ENCODE measurements at regions of chr10 and their contacts with region 1.

Region 1: DNA sequence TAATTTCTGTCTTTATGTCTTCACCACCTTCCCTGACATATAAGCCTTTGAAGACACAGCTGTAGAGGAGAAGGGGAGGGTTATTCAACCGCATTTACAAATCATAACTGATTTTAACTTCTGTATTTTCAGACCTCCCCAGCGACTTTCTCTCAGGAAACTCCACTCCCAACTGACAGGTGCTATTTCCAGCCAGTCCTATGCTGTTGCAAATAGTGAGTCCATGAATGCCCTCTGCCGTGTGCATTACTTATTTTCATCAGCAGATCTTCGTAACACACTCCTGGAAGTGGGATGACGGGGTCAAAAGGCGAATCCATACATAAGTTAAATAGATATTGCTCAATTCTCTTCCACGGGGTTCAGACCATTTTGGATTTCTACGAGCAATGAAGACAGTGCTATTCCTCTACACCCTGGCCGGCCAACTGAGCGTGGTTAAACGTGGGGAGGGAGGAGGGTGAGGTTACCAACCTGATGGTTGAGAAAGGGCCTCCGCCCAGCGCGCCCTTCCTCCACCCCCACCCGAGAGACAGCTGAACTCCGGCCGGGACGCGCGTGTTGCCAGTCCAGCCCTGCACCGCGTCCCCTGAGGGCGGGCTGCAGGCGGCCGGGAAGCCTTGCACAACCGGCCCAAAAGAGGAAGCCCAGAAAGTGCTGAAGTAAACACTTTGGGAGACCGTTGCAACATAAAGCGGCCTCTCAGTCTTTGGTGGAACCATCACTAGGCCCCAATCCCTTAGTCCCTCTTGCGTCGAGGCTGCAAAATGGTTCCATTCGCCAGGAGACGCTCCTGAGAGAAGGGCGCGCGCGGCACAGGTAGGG is at the start of gene APBB1IP:
- DNase-seq: peak; percentile 65
- ATAC-seq: peak; percentile 77
- H3K4me3 Mint-ChIP-seq: peak within 1 kb of the TSS; percentile 93
- H3K27ac Mint-ChIP-seq: peak within 1 kb of the TSS; percentile 96
- H3K4me1 Mint-ChIP-seq: peaks cover 52% of the 10 kb centered on the region
- H3K27me3 Mint-ChIP-seq: no peaks in the 10 kb centered on the region
- CTCF ChIP-seq: no peak
- total RNA-seq, gene APBB1IP: 79.1 and 85.5 TPM in 2 replicates

Region 2: DNA sequence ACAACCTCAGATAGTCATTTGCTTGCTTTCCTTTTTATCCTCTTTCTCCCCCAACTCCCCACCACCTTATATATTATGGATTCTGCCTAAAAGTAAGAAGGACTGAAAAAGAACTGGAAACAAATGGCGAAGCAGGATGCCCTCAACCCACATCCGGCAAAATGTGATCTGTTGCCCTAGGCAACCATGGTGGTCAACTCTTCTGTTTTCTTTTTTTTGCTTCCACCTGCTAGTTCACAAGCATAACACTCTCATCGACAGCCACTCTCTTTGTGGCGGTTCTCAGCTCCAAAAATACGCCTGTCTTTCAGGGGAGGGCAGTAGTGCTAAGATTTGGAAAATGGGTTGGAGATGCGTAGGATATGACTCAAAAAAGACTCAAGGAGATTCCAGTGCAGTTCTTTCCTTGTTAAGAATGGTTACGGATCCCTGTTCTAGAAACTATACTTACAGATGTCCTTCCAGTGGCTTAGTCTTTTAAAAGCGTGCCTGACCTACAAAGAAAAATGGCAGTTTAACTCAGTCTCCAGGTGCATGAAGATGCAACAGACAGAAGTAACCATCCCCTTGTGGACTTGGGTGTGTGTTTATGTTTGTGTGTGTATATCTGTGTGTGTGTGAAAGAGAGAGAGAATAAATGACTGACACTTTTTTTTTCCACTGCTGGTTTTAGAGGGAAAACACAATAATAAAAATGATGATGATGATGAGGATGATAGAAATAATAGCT is 11.0 kb after region 1 on chr10:
- CTCF ChIA-PET with region 1: interaction called, 4 read pairs
- POLR2A ChIA-PET with region 1: interaction called, 39 read pairs
- intact Hi-C with region 1: loop called (anchors 1 kb)
- DNase-seq: peak; percentile 43
- ATAC-seq: peak; percentile 66
- H3K4me3 Mint-ChIP-seq: peak overlapping the region; percentile 75
- H3K27ac Mint-ChIP-seq: peak overlapping the region; percentile 97
- H3K4me1 Mint-ChIP-seq: peaks cover 92% of the 10 kb centered on the region
- H3K27me3 Mint-ChIP-seq: no peaks in the 10 kb centered on the region
- CTCF ChIP-seq: no peak

Region 3: DNA sequence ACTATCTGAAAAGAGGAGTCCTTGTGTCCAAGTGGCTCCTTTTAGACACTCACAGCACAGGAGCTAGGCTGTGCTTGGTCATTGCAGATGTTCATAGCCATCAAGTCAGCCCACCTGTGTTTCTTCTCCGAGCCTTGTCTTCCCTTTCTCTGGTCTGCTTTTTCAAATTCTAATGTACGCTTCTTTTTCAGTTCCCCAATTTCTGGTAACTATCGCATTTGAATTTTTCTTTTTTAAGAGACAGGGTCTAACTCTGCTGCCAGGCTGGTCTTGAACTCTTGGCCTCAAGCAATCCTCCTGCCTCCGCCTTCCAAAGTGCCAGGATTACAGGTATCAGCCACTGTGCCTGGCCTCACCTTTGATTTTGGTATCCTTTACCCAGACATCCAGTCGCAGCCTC is 19.2 kb after region 1 on chr10:
- CTCF ChIA-PET with region 1: no interaction called
- POLR2A ChIA-PET with region 1: interaction called, 18 read pairs
- intact Hi-C with region 1: loop called (anchors 2 kb)
- DNase-seq: no peak
- ATAC-seq: peak; percentile 93
- H3K4me3 Mint-ChIP-seq: peak overlapping the region; percentile 63
- H3K27ac Mint-ChIP-seq: peak overlapping the region; percentile 91
- H3K4me1 Mint-ChIP-seq: peaks cover 71% of the 10 kb centered on the region
- H3K27me3 Mint-ChIP-seq: no peaks in the 10 kb centered on the region
- CTCF ChIP-seq: no peak

Region 4: DNA sequence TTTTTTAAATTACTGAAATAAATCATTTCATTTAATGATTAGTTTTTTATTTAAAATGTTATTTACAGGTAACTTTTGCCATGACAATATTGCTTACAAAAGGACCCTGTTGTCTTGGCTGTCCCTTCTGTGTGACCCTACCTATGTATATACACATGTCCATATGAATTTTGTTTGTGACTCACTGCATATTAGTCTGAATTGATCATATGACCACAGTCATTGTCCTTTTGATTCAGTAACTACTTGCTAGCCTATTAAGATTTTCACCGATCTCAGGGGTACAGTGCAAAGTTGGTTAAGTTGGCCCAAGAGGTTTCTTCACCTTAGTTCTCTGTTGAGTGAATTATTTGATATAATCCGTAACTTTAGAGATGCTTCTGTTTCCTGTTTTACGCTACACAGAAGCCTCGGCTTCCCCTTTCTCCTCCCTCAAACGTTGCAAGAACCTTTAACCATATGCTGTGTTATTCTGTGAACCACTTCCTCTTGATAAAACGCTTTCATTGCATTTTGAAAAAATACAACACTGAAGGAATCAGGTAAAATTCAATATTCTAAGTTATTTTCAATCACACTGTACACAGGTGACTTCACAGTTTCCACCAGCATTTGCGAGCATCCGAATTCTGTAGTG is 44.2 kb after region 1 on chr10:
- CTCF ChIA-PET with region 1: interaction called, 5 read pairs
- POLR2A ChIA-PET with region 1: interaction called, 29 read pairs
- intact Hi-C with region 1: loop called (anchors 1 kb)
- DNase-seq: no peak
- ATAC-seq: peak; percentile 79
- H3K4me3 Mint-ChIP-seq: peak overlapping the region; percentile 46
- H3K27ac Mint-ChIP-seq: peak overlapping the region; percentile 83
- H3K4me1 Mint-ChIP-seq: peaks cover 82% of the 10 kb centered on the region
- H3K27me3 Mint-ChIP-seq: no peaks in the 10 kb centered on the region
- CTCF ChIP-seq: no peak

Region 5: GRCh38 chr10:26486991-26487850 is 49.4 kb after region 1 on chr10:
- CTCF ChIA-PET with region 1: no interaction called
- POLR2A ChIA-PET with region 1: interaction called, 14 read pairs
- intact Hi-C with region 1: loop called (anchors 1 kb)
- DNase-seq: no peak
- ATAC-seq: peak; percentile 82
- H3K4me3 Mint-ChIP-seq: peak overlapping the region; percentile 59
- H3K27ac Mint-ChIP-seq: peak overlapping the region; percentile 90
- H3K4me1 Mint-ChIP-seq: peaks cover 66% of the 10 kb centered on the region
- H3K27me3 Mint-ChIP-seq: no peaks in the 10 kb centered on the region
- CTCF ChIP-seq: no peak

Region 6: GRCh38 chr10:26540601-26541000 is 102.8 kb after region 1 on chr10:
- CTCF ChIA-PET with region 1: no interaction called
- POLR2A ChIA-PET with region 1: no interaction called
- intact Hi-C with region 1: loop called (anchors 5 kb)
- DNase-seq: no peak
- ATAC-seq: peak; percentile 62
- H3K4me3 Mint-ChIP-seq: no peak overlapping the region
- H3K27ac Mint-ChIP-seq: peak overlapping the region; percentile 75
- H3K4me1 Mint-ChIP-seq: peaks cover 33% of the 10 kb centered on the region
- H3K27me3 Mint-ChIP-seq: no peaks in the 10 kb centered on the region
- CTCF ChIP-seq: no peak

Region 7: GRCh38 chr10:26697163-26697921 is 259.5 kb after region 1 on chr10 and contains the start of gene PDSS1:
- CTCF ChIA-PET with region 1: no interaction called
- POLR2A ChIA-PET with region 1: no interaction called
- intact Hi-C with region 1: loop called (anchors 5 kb)
- DNase-seq: peak; percentile 65
- ATAC-seq: peak; percentile 87
- H3K4me3 Mint-ChIP-seq: peak within 1 kb of the TSS; percentile 93
- H3K27ac Mint-ChIP-seq: peak within 1 kb of the TSS; percentile 84
- H3K4me1 Mint-ChIP-seq: peaks cover 27% of the 10 kb centered on the region
- H3K27me3 Mint-ChIP-seq: no peaks in the 10 kb centered on the region
- CTCF ChIP-seq: no peak
- total RNA-seq, gene PDSS1: 8.7 and 9.0 TPM in 2 replicates